HEK293 (cell line): ENCODE measurements at regions of chr5 and their contacts with region 1.

Region 1: DNA sequence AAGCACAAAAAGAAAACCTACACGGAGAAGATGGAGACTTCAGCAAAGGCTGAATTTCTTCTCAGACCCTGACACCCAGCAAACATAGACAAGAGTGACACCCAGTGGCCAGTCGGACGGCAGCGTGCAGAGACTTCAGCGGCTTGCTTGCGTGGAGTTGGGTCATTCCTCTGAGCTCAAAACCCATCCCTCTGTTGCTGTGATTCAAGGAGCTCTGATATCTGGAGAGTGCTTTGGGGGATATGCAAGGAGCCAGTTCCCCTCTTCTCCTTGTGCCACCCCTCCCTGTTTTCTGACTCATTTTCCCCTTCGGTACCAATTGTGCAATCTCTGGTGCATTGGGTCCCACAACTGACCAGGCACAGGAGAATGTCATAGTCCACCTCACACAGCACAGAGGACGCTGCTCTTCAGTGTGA is 27.5 kb downstream of the SH3TC2 start:
- H3K4me3 ChIP-seq: no peak overlapping the region
- H3K27ac ChIP-seq: no peak overlapping the region
- H3K4me1 ChIP-seq: no peaks in the 10 kb centered on the region
- CTCF ChIP-seq: peak; percentile 53; the same call in 1 of the 2 replicates

Region 2: DNA sequence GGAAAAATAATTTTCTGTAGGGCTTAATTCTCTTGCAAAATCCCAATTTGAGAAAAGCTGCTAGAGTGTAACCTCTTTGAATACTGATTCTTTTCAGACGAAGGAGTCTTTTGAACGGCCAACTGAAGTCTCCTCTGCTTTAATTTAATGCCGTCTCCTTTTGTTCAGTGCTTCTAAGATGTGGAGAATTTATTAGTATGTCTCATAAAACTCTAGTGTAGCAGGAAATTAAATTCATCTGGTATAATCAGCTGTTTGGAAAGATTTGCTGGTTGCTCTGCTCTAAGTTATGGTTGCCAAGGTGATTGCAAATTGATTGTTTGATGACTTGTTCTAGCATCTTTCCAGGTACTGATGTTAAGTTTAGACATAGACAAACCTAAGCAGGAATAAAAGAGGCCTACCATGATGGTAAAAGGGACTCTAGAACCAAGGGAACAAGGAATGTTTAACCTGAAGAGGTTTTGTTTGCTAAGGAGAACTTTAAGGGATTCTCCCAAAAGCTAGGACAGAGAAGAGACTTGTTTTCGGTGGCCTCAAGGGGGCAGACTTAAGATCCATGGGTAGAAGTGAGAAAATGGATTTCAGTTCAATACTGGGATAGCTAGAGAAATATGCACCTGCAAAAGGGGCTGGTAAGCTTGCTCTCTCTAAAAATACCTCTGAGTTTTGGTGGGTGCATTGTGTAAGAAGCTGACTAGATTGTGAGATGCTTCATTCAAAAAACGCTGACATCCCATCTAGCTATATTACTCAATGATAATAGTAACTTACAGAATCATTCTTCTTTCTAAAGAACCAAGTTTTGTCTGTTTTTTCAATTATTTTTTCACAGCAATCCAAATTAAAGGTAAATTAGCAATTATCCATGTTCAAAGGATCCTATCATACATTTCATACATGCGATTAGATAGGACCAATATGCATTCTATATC is 214.7 kb before region 1 on chr5:
- CTCF ChIA-PET with region 1: interaction called, 26 read pairs
- POLR2A ChIA-PET with region 1: no interaction called
- H3K4me3 ChIP-seq: no peak overlapping the region
- H3K27ac ChIP-seq: no peak overlapping the region
- H3K4me1 ChIP-seq: peaks cover 5% of the 10 kb centered on the region; the same call in 1 of the 2 replicates
- CTCF ChIP-seq: peak; percentile 32

Region 3: DNA sequence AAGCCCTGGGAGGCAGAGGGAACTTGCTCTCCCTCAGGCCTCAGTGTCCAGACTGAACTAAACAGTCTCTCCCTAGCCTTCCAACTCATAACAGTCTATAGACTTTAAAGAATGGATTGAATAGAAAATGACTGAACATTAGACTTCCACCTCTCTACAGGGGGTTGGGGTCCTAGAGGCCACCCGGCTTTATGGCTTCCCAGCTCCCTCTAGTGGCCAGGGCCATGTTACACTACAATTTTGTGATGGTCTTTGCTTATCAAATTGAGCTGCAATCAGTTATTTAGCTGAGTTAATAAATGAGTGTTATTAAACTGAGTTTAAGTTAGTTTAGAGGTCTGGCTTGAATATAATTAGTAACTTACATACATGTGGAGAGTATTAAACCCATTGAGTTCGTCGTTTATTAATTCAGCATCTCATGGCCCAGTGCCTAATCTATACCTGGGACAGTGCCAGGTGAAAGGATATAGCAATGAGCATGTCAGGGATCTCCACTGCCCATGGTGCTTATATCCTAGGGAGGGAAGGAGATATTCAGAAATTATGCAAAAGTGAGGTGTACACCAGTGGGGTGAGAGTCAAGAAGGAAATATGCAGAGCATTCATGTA is 77.7 kb before region 1 on chr5:
- CTCF ChIA-PET with region 1: interaction called, 60 read pairs
- POLR2A ChIA-PET with region 1: no interaction called
- H3K4me3 ChIP-seq: no peak overlapping the region
- H3K27ac ChIP-seq: no peak overlapping the region
- H3K4me1 ChIP-seq: no peaks in the 10 kb centered on the region
- CTCF ChIP-seq: peak; percentile 64; the same call in 1 of the 2 replicates

Region 4: GRCh38 chr5:148991606-148992005 is 43.8 kb before region 1 on chr5:
- CTCF ChIA-PET with region 1: interaction called, 44 read pairs
- POLR2A ChIA-PET with region 1: no interaction called
- H3K4me3 ChIP-seq: no peak overlapping the region
- H3K27ac ChIP-seq: no peak overlapping the region
- H3K4me1 ChIP-seq: no peaks in the 10 kb centered on the region
- CTCF ChIP-seq: no peak

Region 5: GRCh38 chr5:149049371-149049781 is 14.0 kb after region 1 on chr5:
- CTCF ChIA-PET with region 1: interaction called, 25 read pairs
- POLR2A ChIA-PET with region 1: no interaction called
- H3K4me3 ChIP-seq: no peak overlapping the region
- H3K27ac ChIP-seq: no peak overlapping the region
- H3K4me1 ChIP-seq: no peaks in the 10 kb centered on the region
- CTCF ChIP-seq: no peak